BJ (cell line): ENCODE measurements at regions of chr2 and their contacts with region 1.

Region 1: GRCh38 chr2:85445316-85446295 is 27.1 kb downstream of the SH2D6 start:
- DNase-seq: peak; percentile 49
- H3K4me3 ChIP-seq: no peak overlapping the region
- H3K27me3 ChIP-seq: no peaks in the 10 kb centered on the region; the same call in 1 of the 2 replicates
- CTCF ChIP-seq: no peak

Region 2: DNA sequence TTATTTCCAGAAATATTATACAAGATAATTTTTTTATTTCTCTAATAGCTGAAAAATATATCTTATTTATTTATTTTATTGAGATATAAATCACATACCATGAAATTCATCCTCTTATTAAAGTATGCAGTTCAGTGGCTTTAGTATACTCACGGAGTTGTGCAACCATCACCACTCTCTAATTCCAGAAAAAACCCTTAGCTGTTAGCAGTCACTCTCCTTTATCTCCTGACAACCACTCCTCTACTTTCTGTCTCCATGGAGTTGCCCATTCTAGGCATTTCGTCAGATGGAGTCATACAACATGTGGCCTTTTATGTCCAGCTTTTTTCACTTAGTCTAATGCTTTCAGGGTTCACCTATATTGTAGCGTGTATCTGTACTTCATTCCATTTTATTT is 245.9 kb before region 1 on chr2:
- CTCF ChIA-PET with region 1: no interaction called
- POLR2A ChIA-PET with region 1: no interaction called
- DNase-seq: no peak
- H3K4me3 ChIP-seq: no peak overlapping the region
- H3K27me3 ChIP-seq: no peaks in the 10 kb centered on the region
- CTCF ChIP-seq: no peak

Region 3: GRCh38 chr2:85433511-85434089 is 12.0 kb before region 1 on chr2:
- CTCF ChIA-PET with region 1: no interaction called
- POLR2A ChIA-PET with region 1: interaction called, 10 read pairs
- DNase-seq: peak; percentile 91
- H3K4me3 ChIP-seq: no peak overlapping the region
- H3K27me3 ChIP-seq: no peaks in the 10 kb centered on the region
- CTCF ChIP-seq: no peak